Endothelial cell of umbilical vein (primary cell): ENCODE measurements at regions of chr13 and their contacts with region 1.

Region 1: DNA sequence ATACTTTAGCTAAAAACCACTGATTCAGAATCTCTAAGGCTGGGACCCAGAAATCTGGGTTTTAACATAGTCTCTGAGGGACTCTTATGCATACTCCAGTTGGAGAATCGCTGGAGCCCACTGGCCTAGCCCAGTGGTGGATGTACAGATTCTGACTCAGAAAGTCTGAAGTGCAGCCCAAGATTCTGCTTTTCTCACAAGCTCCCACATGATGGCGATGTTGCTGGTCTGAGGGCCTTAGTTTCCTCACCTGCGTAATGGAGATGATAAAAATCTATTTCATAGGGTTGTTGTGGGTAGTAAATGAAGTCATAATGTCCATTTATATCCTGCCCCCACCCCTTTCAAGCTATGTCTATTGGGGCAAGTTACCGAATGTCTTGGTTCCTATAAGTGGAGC is 7.7 kb upstream of the CDADC1 start:
- DNase-seq: peak; percentile 41
- H3K4me3 ChIP-seq: no peak overlapping the region
- H3K27ac ChIP-seq: no peak overlapping the region
- H3K4me1 ChIP-seq: no peaks in the 10 kb centered on the region
- H3K27me3 ChIP-seq: peaks cover 0 to 3% of the 10 kb centered on the region in 2 experiments
- CTCF ChIP-seq: peak; percentile 48 to 51
- POLR2A ChIP-seq: no peak

Region 2: DNA sequence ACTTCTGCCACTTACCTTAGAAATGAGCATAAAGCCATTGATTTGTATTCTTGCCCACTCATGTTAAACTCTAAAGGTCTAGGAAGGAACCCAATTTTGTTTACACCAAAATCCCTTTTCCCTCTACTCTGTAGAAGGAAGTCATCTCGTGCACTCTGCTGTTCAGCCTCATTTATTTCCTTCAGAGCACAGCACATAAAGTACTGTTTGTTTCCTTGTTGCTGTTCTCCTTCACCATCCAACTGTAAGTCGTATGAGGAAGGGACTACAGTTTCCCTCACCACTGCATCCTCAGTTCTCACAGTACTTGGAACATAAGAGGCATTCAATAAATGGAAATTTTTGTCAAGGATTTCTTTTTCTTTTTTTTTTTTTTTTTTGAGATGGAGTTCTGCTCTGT is 32.3 kb after region 1 on chr13:
- CTCF ChIA-PET with region 1: no interaction called
- POLR2A ChIA-PET with region 1: no interaction called
- dilution Hi-C with region 1: no loop called
- intact Hi-C with region 1: loop called (anchors 1 kb)
- DNase-seq: no peak
- H3K4me3 ChIP-seq: no peak overlapping the region
- H3K27ac ChIP-seq: no peak overlapping the region
- H3K4me1 ChIP-seq: no peaks in the 10 kb centered on the region
- H3K27me3 ChIP-seq: no peaks in the 10 kb centered on the region
- CTCF ChIP-seq: no peak
- POLR2A ChIP-seq: no peak